ENCODE measurements at regions of chr15 and their contacts with region 1.

Region 1: GRCh38 chr15:69755551-69756310 is 303.1 kb downstream of the RPLP1 start:
- DNase-seq: peak; percentile 28 to 86 (median 59)
- ATAC-seq: peak; percentile 59 to 78
- H3K4me3 Mint-ChIP-seq: peak overlapping the region; percentile 54 to 86 (median 73)
- H3K27ac Mint-ChIP-seq: peak overlapping the region; percentile 52 to 93 (median 74)
- H3K4me1 Mint-ChIP-seq: peaks cover 38 to 80% (median 76%) of the 10 kb centered on the region in 4 donors
- H3K27me3 Mint-ChIP-seq: peaks cover 11 to 42% (median 14%) of the 10 kb centered on the region in 5 donors

Region 2: DNA sequence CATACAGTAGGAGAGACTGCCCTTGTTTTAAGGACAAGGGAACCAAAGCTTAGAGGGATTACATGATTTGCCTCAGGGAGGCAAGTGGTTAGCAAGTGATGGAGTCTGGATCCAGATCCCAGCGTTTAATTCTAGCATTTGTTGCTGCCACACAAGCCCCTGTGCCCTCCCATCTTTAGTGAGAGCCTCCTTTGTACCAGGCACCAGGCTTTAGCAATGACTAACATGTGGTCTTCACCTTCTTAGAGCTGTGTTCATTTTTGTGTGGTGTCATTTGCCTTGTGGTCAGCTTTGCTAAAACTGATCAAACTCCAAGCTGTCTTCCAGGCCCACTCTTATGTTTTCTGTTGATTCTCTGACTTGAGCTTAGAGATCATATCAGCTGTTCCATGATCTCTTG is 12.6 kb before region 1 on chr15:
- POLR2A ChIA-PET with region 1: interaction called, 16 read pairs
- DNase-seq: no peak
- ATAC-seq: no peak
- H3K4me3 Mint-ChIP-seq: no peak overlapping the region
- H3K27ac Mint-ChIP-seq: no peak overlapping the region
- H3K4me1 Mint-ChIP-seq: peaks cover 21 to 31% (median 24%) of the 10 kb centered on the region in 4 donors
- H3K27me3 Mint-ChIP-seq: peaks cover 7 to 75% (median 41%) of the 10 kb centered on the region in 5 donors

Region 3: DNA sequence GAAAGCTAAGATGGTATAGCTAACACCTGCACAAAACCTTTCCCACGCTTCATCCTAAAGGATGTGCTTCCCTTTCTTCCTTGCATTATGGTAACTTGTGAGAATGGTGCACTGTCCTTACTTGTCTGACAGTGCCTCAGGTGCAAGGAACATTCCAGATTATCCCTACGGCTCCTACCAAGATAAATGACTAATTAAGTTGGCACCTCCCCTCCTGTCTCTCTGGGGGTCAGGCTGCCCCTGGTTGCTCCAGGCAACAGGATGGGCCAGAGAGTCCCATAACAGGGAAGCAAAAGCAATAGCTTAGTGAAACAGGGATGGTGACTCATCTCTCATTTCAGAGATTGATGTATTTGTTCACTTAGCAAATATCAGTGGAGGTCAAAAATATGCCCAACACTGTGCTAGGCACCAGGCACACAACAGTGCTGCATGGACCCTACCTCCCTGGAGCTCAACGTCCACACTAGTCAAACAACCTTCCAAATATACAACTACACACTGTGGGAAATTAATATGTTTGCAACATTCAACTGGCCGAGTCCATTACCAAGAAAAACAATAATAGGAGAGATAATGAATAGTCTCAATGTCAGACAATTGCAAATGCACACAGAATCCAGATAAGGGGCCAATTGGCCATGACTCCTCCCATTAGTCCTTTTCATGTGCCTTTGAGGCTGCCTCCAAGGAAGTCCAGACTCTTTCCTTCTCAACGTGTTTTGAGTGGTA is 92.9 kb after region 1 on chr15:
- POLR2A ChIA-PET with region 1: no interaction called
- DNase-seq: no peak
- ATAC-seq: no peak
- H3K4me3 Mint-ChIP-seq: no peak overlapping the region
- H3K27ac Mint-ChIP-seq: no peak overlapping the region
- H3K4me1 Mint-ChIP-seq: no peaks in the 10 kb centered on the region
- H3K27me3 Mint-ChIP-seq: peaks cover 0 to 22% (median 6%) of the 10 kb centered on the region in 5 donors

Measured in naive thymus-derived CD8-positive, alpha-beta T cell (primary cell).